ENCODE measurements at regions of chr7 and their contacts with region 1.

Region 1: GRCh38 chr7:135274495-135275268 is 41.0 kb downstream of the STRA8 start:
- DNase-seq: peak; percentile 50 to 73 (median 54)
- H3K4me3 ChIP-seq: no peak overlapping the region
- H3K4me3 Mint-ChIP-seq: no peak overlapping the region
- H3K27ac ChIP-seq: no peak overlapping the region
- H3K27ac Mint-ChIP-seq: no peak overlapping the region
- H3K4me1 ChIP-seq: no peaks in the 10 kb centered on the region
- H3K4me1 Mint-ChIP-seq: peaks cover 0 to 2% (median 2%) of the 10 kb centered on the region in 3 donors
- H3K27me3 ChIP-seq: no peaks in the 10 kb centered on the region
- H3K27me3 Mint-ChIP-seq: peaks cover 8 to 14% of the 10 kb centered on the region in 2 donors

Region 2: GRCh38 chr7:135121868-135122267 is 152.8 kb before region 1 on chr7:
- CTCF ChIA-PET with region 1: no interaction called
- POLR2A ChIA-PET with region 1: no interaction called
- DNase-seq: no peak
- H3K4me3 ChIP-seq: no peak overlapping the region
- H3K4me3 Mint-ChIP-seq: no peak overlapping the region
- H3K27ac ChIP-seq: no peak overlapping the region
- H3K27ac Mint-ChIP-seq: no peak overlapping the region
- H3K4me1 ChIP-seq: no peaks in the 10 kb centered on the region
- H3K4me1 Mint-ChIP-seq: peaks cover 0 to 2% (median 0%) of the 10 kb centered on the region in 3 donors
- H3K27me3 ChIP-seq: no peaks in the 10 kb centered on the region
- H3K27me3 Mint-ChIP-seq: peaks cover 0 to 2% of the 10 kb centered on the region in 2 donors

Region 3: GRCh38 chr7:135238112-135238744 is 36.5 kb before region 1 on chr7:
- CTCF ChIA-PET with region 1: no interaction called
- POLR2A ChIA-PET with region 1: no interaction called
- DNase-seq: no peak
- H3K4me3 ChIP-seq: no peak overlapping the region
- H3K4me3 Mint-ChIP-seq: no peak overlapping the region
- H3K27ac ChIP-seq: no peak overlapping the region
- H3K27ac Mint-ChIP-seq: no peak overlapping the region
- H3K4me1 ChIP-seq: no peaks in the 10 kb centered on the region
- H3K4me1 Mint-ChIP-seq: peaks cover 0 to 2% (median 0%) of the 10 kb centered on the region in 3 donors
- H3K27me3 ChIP-seq: no peaks in the 10 kb centered on the region
- H3K27me3 Mint-ChIP-seq: peaks cover 2 to 23% of the 10 kb centered on the region in 2 donors

Region 4: GRCh38 chr7:135260930-135261721 is 13.6 kb before region 1 on chr7:
- CTCF ChIA-PET with region 1: interaction called, 13 read pairs
- POLR2A ChIA-PET with region 1: no interaction called
- DNase-seq: no peak
- H3K4me3 ChIP-seq: no peak overlapping the region
- H3K4me3 Mint-ChIP-seq: no peak overlapping the region
- H3K27ac ChIP-seq: no peak overlapping the region
- H3K27ac Mint-ChIP-seq: peak overlapping the region in 1 of 8 donors; percentile 38
- H3K4me1 ChIP-seq: no peaks in the 10 kb centered on the region
- H3K4me1 Mint-ChIP-seq: no peaks in the 10 kb centered on the region
- H3K27me3 ChIP-seq: no peaks in the 10 kb centered on the region
- H3K27me3 Mint-ChIP-seq: peaks cover 0 to 8% of the 10 kb centered on the region in 2 donors